SK-N-SH (cell line): ENCODE measurements at regions of chr19 and their contacts with region 1.

Region 1: DNA sequence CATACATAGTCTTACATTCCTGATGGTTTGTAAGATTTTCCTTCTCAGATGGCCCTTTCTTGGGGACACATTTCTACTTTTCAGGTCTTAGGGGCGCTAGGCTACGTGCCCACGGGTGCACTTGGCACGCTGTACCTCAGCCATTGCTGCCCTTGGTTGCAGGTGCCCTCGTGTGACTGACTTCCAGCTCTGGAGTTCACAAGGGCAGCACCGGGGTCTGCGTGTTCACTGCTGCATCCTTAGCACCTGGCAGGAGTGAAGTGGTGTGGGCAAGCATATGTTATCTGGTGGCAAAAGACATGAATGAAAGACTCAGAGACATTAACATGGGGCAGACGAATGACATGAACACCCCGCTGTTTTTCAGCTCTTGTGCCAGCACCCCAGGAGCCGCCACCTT is 13.3 kb upstream of the WDR88 start:
- DNase-seq: no peak
- H3K4me3 ChIP-seq: no peak overlapping the region
- H3K27ac ChIP-seq: no peak overlapping the region
- H3K4me1 ChIP-seq: no peaks in the 10 kb centered on the region
- H3K27me3 ChIP-seq: no peaks in the 10 kb centered on the region
- CTCF ChIP-seq: no peak
- EP300 ChIP-seq: no peak
- RAD21 ChIP-seq: no peak

Region 2: DNA sequence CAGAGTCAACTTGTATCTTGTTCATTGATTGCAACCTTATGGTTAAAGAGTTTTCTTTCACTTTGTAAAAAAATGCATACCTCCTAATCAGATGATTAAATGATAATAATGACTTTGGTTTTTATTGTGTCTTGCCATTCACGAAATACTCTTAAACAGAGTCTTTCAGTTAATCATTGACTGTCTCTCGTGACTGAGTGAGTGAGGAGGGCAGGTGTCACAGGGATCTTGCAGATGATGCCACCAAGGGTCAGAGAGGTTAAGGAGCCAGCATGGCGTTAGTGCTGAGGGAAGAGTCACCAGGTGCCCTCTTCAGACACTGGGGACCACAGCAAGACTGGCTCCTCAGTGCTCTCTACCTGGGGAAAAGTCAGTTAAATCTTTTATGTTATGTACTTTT is 29.6 kb before region 1 on chr19:
- CTCF ChIA-PET with region 1: interaction called, 10 read pairs
- POLR2A ChIA-PET with region 1: no interaction called
- DNase-seq: no peak
- H3K4me3 ChIP-seq: no peak overlapping the region
- H3K27ac ChIP-seq: no peak overlapping the region
- H3K4me1 ChIP-seq: no peaks in the 10 kb centered on the region
- H3K27me3 ChIP-seq: no peaks in the 10 kb centered on the region
- CTCF ChIP-seq: no peak
- EP300 ChIP-seq: no peak
- RAD21 ChIP-seq: no peak

Region 3: DNA sequence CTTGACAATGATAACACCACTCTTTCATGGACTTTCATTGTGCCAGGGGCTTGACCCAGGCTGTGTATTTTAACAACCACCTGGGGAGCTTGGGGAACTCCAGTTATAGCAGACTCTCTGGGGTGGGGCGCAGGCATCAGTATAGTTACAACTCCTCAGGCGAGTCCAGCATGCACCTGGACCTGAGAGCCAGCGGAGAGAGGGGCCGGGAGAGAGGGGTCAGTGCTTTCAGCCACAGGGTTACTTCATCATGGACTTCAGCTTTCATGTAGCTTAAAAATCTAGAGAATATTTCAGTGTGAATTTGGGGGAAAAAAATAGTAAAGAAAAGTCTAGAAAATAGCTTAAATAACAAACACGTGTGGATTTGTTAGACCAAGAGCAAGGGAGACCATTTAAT is 14.1 kb before region 1 on chr19:
- CTCF ChIA-PET with region 1: interaction called, 12 read pairs
- POLR2A ChIA-PET with region 1: no interaction called
- DNase-seq: no peak
- H3K4me3 ChIP-seq: no peak overlapping the region
- H3K27ac ChIP-seq: no peak overlapping the region
- H3K4me1 ChIP-seq: peaks cover 0 to under 1% of the 10 kb centered on the region in 2 experiments; a peak in 1 of 4 replicates
- H3K27me3 ChIP-seq: no peaks in the 10 kb centered on the region
- CTCF ChIP-seq: no peak
- EP300 ChIP-seq: no peak
- RAD21 ChIP-seq: no peak